HEK293 (cell line): ENCODE measurements at regions of chr19 and their contacts with region 1.

Region 1: DNA sequence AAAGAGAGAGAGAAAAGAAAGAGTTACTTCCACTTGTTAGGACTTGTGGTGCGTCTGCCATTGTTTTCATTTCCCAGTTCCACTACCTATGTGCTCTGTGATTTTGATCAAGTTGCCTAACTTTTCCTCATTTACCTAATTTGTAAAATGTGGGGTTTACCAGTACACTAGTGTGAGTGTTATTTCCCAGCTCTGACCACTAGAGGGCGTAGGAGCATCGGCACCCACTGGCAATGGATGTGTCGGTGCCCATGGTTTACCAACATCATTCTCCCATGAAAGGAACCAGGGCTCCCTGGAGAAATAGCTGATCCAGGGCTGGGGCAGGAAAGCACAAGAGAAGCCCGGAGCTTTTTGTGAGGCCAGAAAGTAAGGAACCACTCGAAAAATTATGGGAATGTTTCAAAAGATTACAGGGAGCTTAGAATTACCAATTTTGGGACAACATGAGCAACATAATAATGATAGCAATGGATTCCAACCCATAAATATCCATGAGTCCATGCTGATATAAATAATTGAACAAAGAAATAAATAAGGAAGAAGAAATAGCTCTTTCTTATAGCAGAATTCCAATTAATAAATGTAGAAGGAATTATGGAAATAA is 15.1 kb upstream of the CEACAM4 start:
- H3K4me3 ChIP-seq: no peak overlapping the region
- H3K27ac ChIP-seq: no peak overlapping the region
- H3K4me1 ChIP-seq: no peaks in the 10 kb centered on the region
- CTCF ChIP-seq: peak; percentile 75

Region 2: DNA sequence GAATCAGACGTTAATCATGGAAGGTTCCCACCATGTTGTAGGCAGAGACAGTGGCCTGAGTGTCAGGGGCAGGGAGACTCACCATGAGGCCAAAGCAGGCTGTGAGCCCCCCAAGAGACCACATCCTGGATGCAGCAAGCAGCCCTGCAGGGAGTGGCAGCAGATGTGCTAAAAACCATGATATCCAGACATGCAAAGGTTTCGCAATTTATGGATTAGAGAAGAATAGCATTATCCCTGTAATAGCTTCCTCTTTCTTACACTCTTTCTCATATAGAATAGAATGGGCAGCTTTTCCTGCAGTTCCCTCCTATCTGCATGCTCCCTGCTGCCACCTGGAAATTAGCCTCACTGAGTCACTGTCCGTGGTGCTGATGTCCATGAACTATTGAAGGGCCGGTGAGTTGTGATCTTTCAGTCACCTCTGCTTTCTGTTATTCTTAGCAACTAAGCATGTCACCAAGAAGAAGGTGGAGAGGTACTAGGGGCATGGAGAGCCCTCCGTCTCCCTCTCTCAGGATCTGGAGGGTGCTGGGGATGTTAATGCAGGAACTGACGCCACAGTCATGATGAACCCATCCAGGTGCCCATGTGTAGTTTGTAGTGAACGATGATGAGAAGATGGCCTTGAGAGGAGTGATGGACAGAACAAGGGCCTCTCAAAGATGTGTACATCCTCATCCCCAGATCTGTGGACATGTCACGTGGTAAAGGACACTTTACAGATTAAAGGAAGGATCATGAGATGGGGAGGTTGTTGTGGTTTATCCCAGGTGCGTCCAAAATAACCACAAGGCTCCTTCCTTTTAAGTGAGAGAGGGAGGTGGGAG is 25.0 kb before region 1 on chr19:
- CTCF ChIA-PET with region 1: interaction called, 10 read pairs
- POLR2A ChIA-PET with region 1: no interaction called
- H3K4me3 ChIP-seq: no peak overlapping the region
- H3K27ac ChIP-seq: no peak overlapping the region
- H3K4me1 ChIP-seq: no peaks in the 10 kb centered on the region
- CTCF ChIP-seq: no peak

Region 3: DNA sequence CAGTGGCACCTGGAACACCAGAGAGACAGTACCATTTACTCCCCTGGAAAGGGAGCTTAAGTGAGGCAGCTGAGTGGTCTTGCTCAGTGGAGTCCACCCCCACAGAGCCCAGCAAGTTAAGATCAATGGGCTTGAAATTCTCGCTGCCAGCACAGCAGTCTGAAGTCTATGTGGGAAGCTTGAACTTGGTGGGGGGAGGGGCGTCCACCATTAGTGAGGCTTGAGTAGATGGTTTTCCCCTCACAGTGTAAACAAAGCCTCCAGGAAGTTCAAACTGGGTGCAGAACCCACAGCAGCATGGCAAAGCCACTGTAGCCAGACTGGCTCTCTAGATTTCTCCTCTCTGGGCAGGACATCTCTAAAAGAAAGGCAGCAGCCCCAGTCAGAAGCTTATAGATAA is 15.2 kb after region 1 on chr19:
- CTCF ChIA-PET with region 1: interaction called, 58 read pairs
- POLR2A ChIA-PET with region 1: no interaction called
- H3K4me3 ChIP-seq: no peak overlapping the region
- H3K27ac ChIP-seq: no peak overlapping the region
- H3K4me1 ChIP-seq: no peaks in the 10 kb centered on the region
- CTCF ChIP-seq: no peak

Region 4: GRCh38 chr19:41671491-41671890 is 29.5 kb after region 1 on chr19:
- CTCF ChIA-PET with region 1: interaction called, 14 read pairs
- POLR2A ChIA-PET with region 1: no interaction called
- H3K4me3 ChIP-seq: no peak overlapping the region
- H3K27ac ChIP-seq: no peak overlapping the region
- H3K4me1 ChIP-seq: no peaks in the 10 kb centered on the region
- CTCF ChIP-seq: no peak

Region 5: GRCh38 chr19:41701401-41702075 is 59.6 kb after region 1 on chr19:
- CTCF ChIA-PET with region 1: interaction called, 41 read pairs
- POLR2A ChIA-PET with region 1: no interaction called
- H3K4me3 ChIP-seq: no peak overlapping the region
- H3K27ac ChIP-seq: no peak overlapping the region
- H3K4me1 ChIP-seq: peaks cover 3% of the 10 kb centered on the region; the same call in 1 of the 2 replicates
- CTCF ChIP-seq: peak; percentile 62

Region 6: DNA sequence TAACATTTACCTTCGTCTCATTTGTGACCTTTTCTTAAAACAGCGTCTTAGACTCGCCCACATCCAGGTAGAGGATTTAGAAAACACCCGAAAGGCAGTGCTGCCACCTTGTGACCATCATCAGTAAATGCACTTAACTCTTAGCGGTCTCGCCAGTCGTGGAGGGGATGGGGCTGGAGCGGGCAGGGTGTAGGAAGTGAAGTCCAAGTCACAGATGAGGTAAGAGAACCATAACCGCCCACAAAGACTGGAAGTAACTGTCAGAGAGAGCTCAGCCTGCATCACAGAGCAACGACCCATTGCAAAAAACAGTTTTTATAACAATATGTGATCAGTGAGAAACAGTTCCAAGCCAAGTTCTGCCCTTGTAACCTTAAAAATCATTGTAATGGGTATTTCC is 143.7 kb after region 1 on chr19:
- CTCF ChIA-PET with region 1: interaction called, 21 read pairs
- POLR2A ChIA-PET with region 1: no interaction called
- H3K4me3 ChIP-seq: no peak overlapping the region
- H3K27ac ChIP-seq: no peak overlapping the region
- H3K4me1 ChIP-seq: peaks cover 3% of the 10 kb centered on the region; the same call in 1 of the 2 replicates
- CTCF ChIP-seq: peak; percentile 70